AG04449 (cell line): ENCODE measurements at regions of chr1 and their contacts with region 1.

Region 1: DNA sequence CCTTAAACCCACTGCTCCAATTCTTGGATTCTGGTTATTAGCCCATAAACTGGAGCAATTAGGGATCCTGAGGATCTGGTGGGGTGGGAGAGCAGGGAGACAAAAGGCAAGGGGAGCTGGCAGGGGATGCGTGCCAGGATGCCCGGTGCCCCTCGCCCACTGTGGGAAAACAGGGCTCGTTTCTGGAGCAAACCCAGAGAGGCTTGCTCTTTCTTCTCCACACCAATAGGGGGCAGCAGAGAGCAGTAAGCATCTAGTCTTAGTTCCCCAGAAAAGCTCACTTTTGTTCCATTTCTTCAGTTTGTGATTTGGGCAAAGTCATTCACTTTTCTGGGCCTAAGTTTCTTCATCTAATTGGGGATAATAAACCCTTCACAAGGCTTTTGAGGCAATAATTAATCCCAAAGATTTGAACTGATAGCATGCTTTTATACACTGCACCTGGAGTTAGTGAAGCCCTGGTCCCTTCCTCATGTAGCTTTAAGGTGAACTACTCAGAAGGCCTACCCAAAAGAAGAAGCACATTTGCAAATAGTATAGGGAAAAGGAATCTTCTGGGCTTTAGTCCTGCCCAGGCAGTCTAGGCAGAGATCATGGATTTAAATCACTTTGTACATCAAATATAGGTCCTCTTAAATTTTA is 160.6 kb upstream of the USP24 start:
- DNase-seq: no peak
- H3K4me3 ChIP-seq: no peak overlapping the region
- CTCF ChIP-seq: peak; percentile 83

Region 2: DNA sequence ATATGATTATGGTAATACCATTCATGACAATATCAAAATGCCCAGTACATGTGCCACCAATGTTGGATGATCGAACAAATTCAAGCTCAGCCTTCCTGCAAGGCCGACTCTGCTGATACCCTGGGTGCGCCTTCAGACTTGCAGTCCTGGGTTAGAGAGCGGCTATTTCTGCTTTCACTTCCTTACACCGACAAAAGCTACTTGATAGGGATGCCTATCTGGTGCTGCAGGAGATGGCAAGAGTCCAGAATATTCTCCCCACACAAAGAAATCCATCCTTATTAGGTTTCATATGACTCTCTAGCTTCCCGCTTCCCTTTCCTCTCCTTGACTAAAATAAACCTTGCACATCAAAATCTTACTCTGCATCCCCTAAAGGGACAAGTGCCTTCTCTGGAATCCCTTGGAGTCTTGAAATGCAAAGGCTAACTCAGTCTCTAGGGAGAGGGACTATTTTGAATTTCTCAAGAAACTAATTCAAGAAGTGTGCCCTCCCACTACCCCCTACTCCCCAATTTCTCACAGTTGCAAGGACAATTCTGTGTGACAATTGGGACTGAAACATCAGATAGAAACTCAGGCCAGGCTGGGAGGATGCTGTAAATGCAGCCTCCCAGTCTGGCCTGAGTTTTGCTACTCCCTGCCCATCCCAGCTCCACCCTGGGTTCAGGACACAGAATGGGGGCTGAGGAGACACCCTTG is 57.5 kb before region 1 on chr1:
- CTCF ChIA-PET with region 1: interaction called, 14 read pairs
- POLR2A ChIA-PET with region 1: no interaction called
- DNase-seq: no peak
- H3K4me3 ChIP-seq: no peak overlapping the region
- CTCF ChIP-seq: no peak

Region 3: DNA sequence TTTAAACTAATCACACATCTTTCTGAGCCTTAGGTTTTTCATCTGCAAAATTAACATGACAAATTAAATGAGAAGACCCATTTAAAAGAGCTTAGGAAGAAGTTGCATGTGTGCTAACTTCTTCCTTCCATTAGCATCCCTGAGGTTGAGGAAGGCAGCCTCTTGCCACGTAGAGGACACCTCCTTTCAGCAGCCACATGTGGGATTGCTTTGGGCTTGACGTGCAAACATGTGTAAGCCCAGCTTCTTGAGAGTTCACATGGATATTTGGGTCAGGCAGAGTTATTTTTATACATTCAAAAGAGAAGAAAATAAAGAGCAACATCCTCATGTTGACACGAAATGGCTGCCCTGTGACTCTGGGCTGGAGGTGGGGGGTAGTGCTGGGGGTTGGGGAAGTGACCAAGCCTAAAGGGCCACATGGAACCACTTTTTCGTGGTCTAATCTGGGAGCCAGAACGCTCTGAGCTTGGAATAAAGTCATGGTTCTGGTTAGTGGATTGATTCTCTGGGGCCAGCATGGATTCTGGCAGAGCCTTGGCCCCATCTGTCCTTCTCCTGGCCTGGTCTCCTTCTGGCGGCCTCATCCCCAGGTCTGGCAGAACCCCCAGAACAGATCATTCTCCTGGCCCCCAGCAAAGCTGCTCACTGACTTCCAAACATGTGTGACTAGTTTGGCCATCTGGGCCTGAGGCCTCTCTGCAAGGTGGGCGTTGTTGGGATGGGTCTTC is 23.5 kb before region 1 on chr1:
- CTCF ChIA-PET with region 1: interaction called, 120 read pairs
- POLR2A ChIA-PET with region 1: no interaction called
- DNase-seq: no peak
- H3K4me3 ChIP-seq: no peak overlapping the region
- CTCF ChIP-seq: no peak

Region 4: DNA sequence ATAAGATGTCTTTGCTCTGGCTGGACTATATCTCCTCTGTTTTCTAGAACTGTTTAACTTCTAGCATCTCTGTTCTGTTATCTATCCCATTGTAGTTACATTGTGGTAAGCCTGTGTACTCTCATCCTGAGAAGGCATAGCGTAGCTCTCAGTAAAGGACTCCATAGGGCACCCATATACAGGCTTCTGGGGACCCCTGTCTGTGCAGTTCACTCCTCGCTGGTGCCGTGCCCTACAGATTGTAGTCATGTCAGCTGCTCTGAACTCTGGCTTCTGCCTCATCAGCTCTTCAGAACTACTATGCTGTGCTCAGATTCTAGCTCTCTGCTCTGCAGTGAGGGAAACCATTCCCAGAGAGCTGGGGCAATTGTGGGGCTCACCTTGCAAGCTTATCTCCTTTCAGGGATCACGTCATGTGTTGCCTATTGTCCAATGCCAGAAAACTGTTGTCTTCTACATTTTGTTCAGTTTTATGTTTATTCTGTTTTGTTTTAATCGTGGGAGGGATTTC is 20.7 kb after region 1 on chr1:
- CTCF ChIA-PET with region 1: interaction called, 15 read pairs
- POLR2A ChIA-PET with region 1: no interaction called
- DNase-seq: no peak
- H3K4me3 ChIP-seq: no peak overlapping the region
- CTCF ChIP-seq: no peak

Region 5: DNA sequence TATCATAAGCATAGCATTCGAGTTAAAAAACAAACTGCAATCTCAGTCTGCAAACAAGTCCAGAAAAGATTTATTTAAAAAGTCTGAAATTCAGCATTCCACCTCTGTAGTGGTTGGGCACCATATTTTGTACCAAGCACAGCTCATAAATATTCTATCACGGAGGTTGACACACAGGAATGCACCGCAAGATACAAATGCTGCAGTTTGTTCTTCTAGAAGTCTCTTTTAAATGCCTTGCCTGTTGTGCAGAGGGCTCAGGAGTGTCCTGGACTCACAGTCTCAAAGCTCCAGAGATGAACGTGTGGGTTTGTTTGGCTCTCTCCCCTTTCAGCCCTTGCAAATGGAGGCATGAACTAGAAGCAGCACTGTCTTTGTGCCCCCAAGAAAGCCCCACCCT is 51.9 kb after region 1 on chr1:
- CTCF ChIA-PET with region 1: interaction called, 11 read pairs
- POLR2A ChIA-PET with region 1: no interaction called
- DNase-seq: no peak
- H3K4me3 ChIP-seq: no peak overlapping the region
- CTCF ChIP-seq: no peak

Region 6: DNA sequence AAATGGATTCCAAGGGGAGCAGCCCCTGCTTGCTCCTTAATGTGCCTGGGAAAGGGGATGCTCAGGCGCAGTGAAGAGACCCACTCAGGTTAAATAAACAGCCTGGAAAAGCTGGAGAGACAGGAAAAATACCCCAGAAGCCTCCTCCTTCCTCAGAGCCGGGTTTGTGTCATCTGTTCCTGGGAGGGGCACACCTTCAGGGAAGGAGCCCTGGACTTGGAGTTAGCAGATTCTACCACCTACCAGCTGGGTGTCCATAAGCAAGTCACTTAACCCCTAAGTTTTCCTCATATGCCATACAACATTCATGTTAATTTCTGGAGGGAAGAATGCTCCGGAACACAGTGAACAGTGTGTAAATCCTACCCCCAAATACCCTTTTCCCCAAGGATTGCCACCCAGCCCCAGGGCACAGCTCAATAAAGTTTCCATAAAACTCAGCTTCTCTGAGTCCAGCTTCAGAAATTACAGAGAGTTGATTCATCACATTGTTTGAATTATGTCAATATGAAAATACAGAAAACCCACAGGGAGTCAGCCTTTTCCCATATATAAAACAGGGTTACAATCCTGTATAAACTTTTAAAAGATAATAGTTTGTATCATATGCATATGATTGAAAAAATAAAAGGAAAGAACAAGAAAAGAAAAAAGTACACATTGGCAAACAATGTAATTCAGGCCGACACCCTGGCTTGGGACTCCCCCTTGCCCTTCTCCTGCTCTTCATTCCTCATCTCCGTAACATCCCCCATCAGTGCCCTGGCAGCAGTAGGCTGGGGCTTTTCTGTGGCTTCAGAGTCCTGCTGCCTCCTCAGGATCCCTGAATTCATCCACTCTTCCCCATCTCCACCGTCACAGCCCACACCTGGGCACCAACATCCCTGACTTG is 131.2 kb after region 1 on chr1:
- CTCF ChIA-PET with region 1: interaction called, 14 read pairs
- POLR2A ChIA-PET with region 1: no interaction called
- DNase-seq: no peak
- H3K4me3 ChIP-seq: no peak overlapping the region
- CTCF ChIP-seq: no peak

Region 7: GRCh38 chr1:56584910-56585528 is 1209.3 kb after region 1 on chr1:
- CTCF ChIA-PET with region 1: interaction called, 55 read pairs
- POLR2A ChIA-PET with region 1: no interaction called
- DNase-seq: peak; percentile 33
- H3K4me3 ChIP-seq: no peak overlapping the region
- CTCF ChIP-seq: peak; percentile 54